ENCODE measurements at regions of chr15 and their contacts with region 1.

Region 1: DNA sequence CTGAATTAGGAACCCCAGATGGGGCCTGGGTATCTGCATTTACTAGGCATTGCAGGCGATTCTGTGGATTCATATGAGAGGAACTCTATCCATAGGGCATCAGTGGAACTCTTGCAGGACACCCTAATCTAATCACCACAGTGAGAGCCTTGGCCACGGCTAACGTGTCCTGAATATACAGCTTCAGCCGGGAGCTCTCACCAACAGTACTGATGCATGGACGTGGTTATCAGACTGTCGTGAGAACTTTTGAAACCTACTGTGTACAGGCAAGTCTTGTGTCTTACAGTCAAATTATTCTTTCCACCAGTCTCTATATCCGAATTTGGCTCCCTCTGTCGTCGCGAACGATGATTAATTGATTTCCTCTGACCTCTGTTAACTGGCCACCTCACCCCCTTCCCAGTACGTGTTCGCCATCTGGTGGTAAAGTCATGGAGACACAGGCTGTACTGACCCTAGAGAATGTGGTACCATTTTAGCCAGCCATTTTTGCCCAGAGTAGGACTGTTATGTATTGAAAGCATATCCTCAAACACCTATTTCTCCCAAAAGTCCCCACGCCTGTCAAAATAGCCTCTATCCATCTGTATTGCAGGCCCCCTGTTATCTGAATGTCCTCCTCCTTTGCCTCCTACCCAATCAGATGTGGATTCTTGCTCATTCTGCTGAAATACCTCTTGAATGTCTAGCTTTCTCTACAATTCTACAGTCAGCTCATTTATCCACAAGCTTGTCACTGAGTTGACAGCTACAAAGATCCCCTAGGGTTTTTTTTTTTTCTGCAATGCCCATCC is 39.7 kb downstream of the GLDN start:
- DNase-seq: peak; percentile 46
- H3K4me3 Mint-ChIP-seq: no peak overlapping the region
- H3K27ac Mint-ChIP-seq: no peak overlapping the region
- H3K4me1 Mint-ChIP-seq: no peaks in the 10 kb centered on the region
- H3K27me3 Mint-ChIP-seq: peaks cover 22% of the 10 kb centered on the region

Region 2: GRCh38 chr15:51281368-51281967 is 99.7 kb before region 1 on chr15:
- CTCF ChIA-PET with region 1: interaction called, 3 read pairs
- POLR2A ChIA-PET with region 1: no interaction called
- intact Hi-C with region 1: loop called (anchors 1 kb)
- DNase-seq: peak; percentile 43
- H3K4me3 Mint-ChIP-seq: no peak overlapping the region
- H3K27ac Mint-ChIP-seq: no peak overlapping the region
- H3K4me1 Mint-ChIP-seq: no peaks in the 10 kb centered on the region
- H3K27me3 Mint-ChIP-seq: peaks cover 15% of the 10 kb centered on the region

Region 3: GRCh38 chr15:51366960-51367648 is 14.1 kb before region 1 on chr15:
- CTCF ChIA-PET with region 1: no interaction called
- POLR2A ChIA-PET with region 1: no interaction called
- intact Hi-C with region 1: no loop called
- DNase-seq: no peak
- H3K4me3 Mint-ChIP-seq: no peak overlapping the region
- H3K27ac Mint-ChIP-seq: no peak overlapping the region
- H3K4me1 Mint-ChIP-seq: no peaks in the 10 kb centered on the region
- H3K27me3 Mint-ChIP-seq: no peaks in the 10 kb centered on the region

Region 4: DNA sequence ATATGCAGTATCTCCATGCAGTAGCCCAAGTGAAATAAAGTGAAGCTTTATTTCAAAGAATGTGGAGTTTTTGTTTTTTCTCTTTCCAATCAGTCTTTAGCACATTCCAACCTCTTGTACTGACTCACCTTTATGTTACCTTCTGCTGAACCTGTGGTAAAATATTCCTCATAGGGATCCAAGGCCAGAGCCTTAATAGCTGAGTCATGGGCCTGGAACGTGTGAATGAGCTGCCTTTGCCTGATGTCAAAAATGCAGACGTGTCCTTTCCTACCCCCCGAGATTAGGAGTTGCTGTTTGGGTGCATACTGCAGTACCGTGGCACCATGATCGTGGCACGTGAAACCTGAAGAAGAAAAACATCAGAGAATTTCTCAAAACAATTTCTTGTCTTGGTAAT is 68.8 kb after region 1 on chr15:
- CTCF ChIA-PET with region 1: no interaction called
- POLR2A ChIA-PET with region 1: no interaction called
- intact Hi-C with region 1: no loop called
- DNase-seq: no peak
- H3K4me3 Mint-ChIP-seq: no peak overlapping the region
- H3K27ac Mint-ChIP-seq: no peak overlapping the region
- H3K4me1 Mint-ChIP-seq: no peaks in the 10 kb centered on the region
- H3K27me3 Mint-ChIP-seq: no peaks in the 10 kb centered on the region

Measured in activated CD4-positive, alpha-beta memory T cell treated with anti-CD3 and anti-CD28 coated beads for 36 hours (primary cell).